ENCODE measurements at regions of chr10 and their contacts with region 1.

Region 1: GRCh38 chr10:96292971-96293920 is 11.0 kb upstream of the DNTT start:
- DNase-seq: no peak
- H3K4me3 ChIP-seq: no peak overlapping the region
- H3K27ac ChIP-seq: no peak overlapping the region
- H3K4me1 ChIP-seq: no peaks in the 10 kb centered on the region
- H3K27me3 ChIP-seq: peaks cover 89% of the 10 kb centered on the region
- CTCF ChIP-seq: peak; percentile 73

Region 2: DNA sequence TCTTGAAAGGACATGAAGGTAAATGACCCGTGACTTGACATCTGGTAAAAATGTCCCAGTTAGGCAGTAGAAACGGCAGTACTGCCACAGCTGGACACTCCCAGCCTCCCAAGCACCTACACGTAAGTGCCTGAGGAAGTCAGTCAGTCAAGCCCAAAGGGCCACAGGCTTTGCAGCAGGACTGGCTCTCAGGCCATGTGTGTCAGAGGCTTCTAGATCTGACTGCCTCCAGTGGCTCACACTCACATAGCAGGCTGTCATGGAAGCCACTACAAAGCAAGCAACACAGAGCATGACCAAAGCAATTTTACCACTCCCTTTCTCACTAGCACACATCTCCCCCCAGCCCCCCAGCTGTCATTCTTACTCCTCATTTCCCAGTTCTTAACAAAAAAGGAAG is 267.7 kb before region 1 on chr10:
- intact Hi-C with region 1: loop called (anchors 10 kb)
- DNase-seq: no peak
- H3K4me3 ChIP-seq: no peak overlapping the region
- H3K27ac ChIP-seq: no peak overlapping the region
- H3K4me1 ChIP-seq: no peaks in the 10 kb centered on the region
- H3K27me3 ChIP-seq: no peaks in the 10 kb centered on the region
- CTCF ChIP-seq: no peak

Region 3: DNA sequence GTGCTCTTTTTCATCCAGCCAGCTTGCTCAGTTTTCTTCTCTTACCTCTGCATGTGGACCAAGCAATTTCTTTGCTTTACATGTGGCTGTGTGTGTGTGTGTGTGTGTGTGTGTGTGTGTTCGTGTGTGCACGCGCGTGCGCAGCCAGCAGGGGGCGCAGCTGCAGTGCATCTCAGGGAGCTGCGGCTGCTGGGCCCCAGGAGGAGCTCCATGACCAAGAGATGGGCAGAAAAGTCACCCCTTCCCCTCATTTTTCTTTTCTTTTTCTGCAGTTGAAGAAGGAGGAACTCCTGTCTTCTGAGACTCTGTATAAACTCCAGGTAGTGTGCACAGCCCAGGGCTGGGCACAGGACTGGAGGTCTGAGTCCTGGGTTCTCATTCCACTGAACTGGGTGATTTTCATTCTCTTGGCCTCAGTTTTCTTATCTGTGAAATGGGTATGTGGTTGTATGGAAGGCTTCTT is 63.6 kb before region 1 on chr10:
- intact Hi-C with region 1: loop called (anchors 5 kb)
- DNase-seq: peak; percentile 70
- H3K4me3 ChIP-seq: no peak overlapping the region
- H3K27ac ChIP-seq: no peak overlapping the region
- H3K4me1 ChIP-seq: peaks cover 10% of the 10 kb centered on the region
- H3K27me3 ChIP-seq: peaks cover 76% of the 10 kb centered on the region
- CTCF ChIP-seq: peak; percentile 71

Measured in left ventricle myocardium inferior (tissue), 1 donor.